AG04450 (cell line): ENCODE measurements at regions of chr9 and their contacts with region 1.

Region 1: GRCh38 chr9:124098141-124099090 is 86.8 kb downstream of the LHX2 start:
- DNase-seq: no peak
- H3K4me3 ChIP-seq: no peak overlapping the region
- H3K27ac ChIP-seq: no peak overlapping the region
- H3K27me3 ChIP-seq: peaks cover 31% of the 10 kb centered on the region
- CTCF ChIP-seq: no peak

Region 2: DNA sequence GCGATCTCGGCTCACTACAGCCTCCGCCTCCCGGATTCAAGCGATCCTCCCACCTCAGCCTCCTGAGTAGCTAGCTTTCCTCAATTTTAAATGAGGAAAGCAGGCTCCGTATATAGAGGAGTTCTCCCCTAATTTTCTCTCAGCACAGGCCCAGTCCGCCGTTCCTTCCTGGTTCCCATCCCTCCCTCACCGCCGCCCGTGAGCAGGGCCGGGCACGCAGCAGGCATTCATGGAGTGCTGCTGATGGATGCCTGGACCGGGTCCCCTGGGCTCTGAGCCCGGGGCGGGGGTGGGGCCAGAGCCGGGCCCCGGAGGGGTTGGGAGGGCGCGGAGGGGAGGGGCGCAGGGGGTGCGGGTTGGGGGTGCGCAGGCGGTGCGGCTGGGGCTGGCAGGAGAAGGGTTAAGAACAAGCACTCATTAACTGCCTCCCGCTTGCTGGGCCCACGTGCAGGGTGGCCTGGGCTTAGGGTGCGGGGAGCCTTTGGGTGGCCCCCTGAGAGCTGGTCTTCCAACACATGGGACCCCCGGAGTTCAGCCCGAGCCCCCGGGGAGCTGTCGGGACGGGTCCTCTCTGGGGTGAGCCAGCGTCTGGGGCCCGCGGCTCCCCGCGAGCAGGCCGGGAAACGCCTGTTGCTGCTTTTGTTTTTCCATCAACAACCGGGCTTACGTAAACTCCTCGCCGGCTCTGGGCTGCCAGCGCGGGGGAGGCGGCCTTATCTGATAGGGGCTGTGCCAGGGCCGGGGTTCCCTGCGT is 53.2 kb before region 1 on chr9:
- CTCF ChIA-PET with region 1: no interaction called
- POLR2A ChIA-PET with region 1: no interaction called
- DNase-seq: no peak
- H3K4me3 ChIP-seq: peak overlapping the region; percentile 41
- H3K27ac ChIP-seq: no peak overlapping the region
- H3K27me3 ChIP-seq: peaks cover 56% of the 10 kb centered on the region
- CTCF ChIP-seq: no peak

Region 3: GRCh38 chr9:124220946-124221451 is 122.6 kb after region 1 on chr9:
- CTCF ChIA-PET with region 1: interaction called, 10 read pairs
- POLR2A ChIA-PET with region 1: no interaction called
- DNase-seq: no peak
- H3K4me3 ChIP-seq: no peak overlapping the region
- H3K27ac ChIP-seq: peak overlapping the region; percentile 31
- H3K27me3 ChIP-seq: peaks cover 2% of the 10 kb centered on the region
- CTCF ChIP-seq: no peak